ENCODE measurements at regions of chr17 and their contacts with region 1.

Region 1: DNA sequence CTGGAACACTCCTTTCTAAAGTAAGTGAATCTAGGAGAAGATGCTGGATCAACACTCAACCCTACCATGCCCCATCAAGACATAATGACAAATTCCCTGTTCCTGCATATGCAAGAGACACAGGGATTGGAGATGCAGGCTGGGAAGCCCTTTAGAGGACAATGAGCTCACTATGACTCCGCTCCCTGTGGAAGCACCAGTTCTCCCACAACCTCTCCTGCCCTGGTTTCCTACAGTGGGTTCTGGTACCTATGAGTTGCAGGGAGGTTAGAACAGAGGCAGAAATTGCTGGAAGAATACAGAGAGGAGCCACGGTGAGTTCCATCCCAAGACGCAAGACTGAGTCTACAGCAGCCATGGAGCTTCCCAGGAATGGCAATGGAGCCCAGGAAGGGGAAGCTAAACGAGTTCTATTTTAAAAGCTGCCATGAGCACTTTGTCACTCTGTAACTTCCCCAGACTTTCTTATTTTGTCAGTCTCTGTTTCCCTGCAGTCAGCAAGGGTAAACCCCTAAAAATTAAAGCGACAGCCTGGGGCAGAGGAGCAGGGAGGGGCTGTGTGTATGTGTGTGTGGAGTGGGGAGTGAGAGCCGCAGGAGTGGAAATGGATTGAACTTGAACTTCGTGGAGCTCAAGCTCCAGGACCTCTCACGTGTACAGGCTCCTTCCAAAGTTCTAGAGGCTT is 42.3 kb upstream of the PIK3R6 start:
- DNase-seq: no peak
- H3K4me3 ChIP-seq: no peak overlapping the region
- H3K27ac ChIP-seq: no peak overlapping the region
- H3K4me1 ChIP-seq: no peaks in the 10 kb centered on the region
- H3K27me3 ChIP-seq: peaks cover 0 to 10% of the 10 kb centered on the region in 2 donors
- CTCF ChIP-seq: no peak
- POLR2A ChIP-seq: no peak

Region 2: DNA sequence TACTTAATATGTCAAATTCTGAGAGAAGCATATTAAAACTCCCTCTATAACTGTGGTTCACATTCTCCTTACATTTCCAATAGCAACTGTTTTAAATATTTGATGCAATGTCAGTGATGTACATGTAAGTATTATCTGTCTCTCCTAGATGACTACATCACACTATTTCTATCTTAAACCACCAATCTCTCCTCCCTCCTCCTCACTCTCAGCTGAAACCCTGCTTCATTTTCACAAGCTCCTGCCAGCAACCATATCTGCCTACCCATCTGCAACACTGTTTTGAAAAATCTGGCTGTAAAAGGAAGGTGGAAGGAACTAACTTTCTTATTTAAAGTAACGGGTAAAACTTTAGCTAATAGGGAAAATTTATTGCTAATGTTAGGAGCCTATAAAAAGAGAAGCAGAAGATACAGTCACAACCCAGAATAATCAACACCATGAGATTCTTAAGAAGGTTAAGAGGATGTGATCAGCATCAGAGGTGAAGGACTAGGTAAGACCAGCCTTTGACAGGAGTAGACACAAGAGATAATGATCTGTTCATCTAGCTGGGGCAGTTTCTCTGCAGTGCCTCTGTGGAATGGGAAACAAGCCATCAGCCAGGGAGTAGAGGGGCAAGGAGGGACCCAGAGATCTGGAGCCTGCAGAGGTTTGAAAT is 310.2 kb before region 1 on chr17:
- intact Hi-C with region 1: loop called (anchors 5 kb)
- DNase-seq: no peak
- H3K4me3 ChIP-seq: no peak overlapping the region
- H3K27ac ChIP-seq: no peak overlapping the region
- H3K4me1 ChIP-seq: no peaks in the 10 kb centered on the region
- H3K27me3 ChIP-seq: no peaks in the 10 kb centered on the region
- CTCF ChIP-seq: no peak
- POLR2A ChIP-seq: no peak

Region 3: DNA sequence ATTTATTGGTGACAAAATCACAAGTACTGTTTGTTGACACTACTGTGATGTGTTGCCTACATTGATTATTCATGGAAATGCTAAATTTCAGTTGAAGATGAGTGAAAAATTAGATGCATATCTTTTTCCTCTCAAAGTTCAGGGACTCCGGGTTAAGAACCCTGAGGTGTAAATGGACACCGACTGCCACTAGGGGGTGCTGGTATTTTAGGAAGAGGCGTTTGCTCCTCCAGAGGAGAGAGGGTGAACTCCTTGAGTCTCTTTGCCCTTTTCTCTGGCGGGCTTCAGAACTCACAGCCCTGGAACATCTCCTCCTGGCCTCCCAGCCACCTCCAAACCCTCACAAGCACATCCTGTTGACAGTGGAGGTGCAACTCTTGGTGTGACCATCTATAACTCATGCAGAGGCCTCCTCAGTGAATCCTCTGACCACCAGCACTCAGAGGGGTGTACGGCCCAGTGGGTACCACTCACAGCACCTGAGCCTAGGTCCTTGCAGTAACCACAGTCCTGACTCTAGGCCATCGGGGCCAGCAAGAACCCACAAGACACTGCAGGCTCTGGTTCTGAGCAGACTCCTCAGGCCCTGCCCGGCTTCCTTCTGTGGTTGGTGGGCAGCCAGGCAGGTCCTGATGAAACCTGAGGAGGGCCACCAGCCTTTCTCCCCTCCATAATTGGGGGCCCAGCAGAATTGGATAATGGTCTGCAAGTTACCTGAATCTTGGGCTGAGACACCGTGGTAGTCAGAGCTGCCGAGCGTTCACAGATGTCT is 82.0 kb after region 1 on chr17:
- intact Hi-C with region 1: no loop called
- DNase-seq: peak; percentile 29 to 70
- H3K4me3 ChIP-seq: no peak overlapping the region
- H3K27ac ChIP-seq: no peak overlapping the region
- H3K4me1 ChIP-seq: no peaks in the 10 kb centered on the region
- H3K27me3 ChIP-seq: peaks cover 0 to 3% of the 10 kb centered on the region in 2 donors
- CTCF ChIP-seq: peak; percentile 47 to 72 (median 71)
- POLR2A ChIP-seq: no peak

Region 4: DNA sequence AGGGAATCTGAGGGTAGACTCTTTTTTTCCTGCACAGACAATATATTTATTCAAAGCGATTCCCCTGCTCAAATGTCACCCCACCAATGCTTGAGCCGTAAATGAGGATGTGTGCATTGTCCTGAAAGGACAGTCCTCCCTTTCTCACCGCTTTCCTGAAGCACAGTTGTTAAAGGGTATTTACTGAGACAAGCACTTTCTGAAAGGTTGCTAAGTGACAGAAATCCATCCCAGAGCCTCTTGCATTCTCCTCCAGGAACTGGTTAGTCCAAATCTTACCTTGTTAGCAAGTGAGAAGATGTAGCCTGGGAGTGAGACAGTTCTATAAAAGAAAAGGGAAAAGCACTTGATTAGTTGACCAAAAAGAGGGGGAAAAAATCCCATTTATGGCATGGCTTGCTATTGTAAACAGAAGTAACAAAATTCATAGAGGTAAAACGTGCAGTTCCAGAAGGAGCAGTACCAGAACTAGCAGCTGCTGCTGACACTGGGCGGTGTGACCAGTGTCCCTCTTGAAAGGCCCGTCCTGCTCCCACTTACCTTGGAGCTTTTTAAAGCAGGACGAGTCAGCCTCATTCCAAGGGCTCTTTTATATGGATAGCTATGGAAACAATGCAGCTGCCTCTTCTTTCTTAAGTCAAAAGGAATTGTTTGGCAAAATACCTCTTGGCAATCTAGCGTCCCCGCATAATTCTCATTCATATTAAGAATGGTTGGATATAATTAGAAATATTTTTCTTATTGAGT is 1639.5 kb after region 1 on chr17 and contains the start of gene MYH2:
- intact Hi-C with region 1: no loop called
- DNase-seq: no peak
- H3K4me3 ChIP-seq: no peak within 1 kb of the TSS
- H3K27ac ChIP-seq: no peak within 1 kb of the TSS
- H3K4me1 ChIP-seq: no peaks in the 10 kb centered on the region
- H3K27me3 ChIP-seq: no peaks in the 10 kb centered on the region
- CTCF ChIP-seq: no peak
- POLR2A ChIP-seq: no peak
- total RNA-seq, gene MYH2: 0.16 TPM in 1 of 3 donors, not detected in the others

Measured in breast epithelium (tissue), 4 donors.